Sigmoid colon (tissue), 7 donors: ENCODE measurements at regions of chr19 and their contacts with region 1.

Region 1: DNA sequence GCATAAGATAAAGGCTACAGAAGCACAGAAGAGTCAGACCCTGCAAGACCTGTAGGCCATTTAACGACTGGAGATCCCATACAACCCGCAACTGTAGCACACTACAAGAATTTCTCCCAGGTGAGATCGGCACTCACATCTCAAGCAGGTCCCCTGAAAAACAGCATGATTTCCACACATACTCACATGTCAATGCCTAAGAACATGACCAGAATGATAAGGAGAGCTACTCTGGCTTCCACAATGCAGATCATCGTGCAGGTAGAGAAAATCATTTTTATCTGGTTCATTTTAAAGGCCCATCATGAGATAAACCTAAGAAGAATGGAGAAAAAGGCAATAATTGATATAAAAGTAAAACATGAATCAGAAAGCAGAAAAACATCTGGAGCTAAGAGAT is 17.5 kb upstream of the PEG3 start:
- DNase-seq: no peak
- H3K4me3 ChIP-seq: no peak overlapping the region
- H3K27ac ChIP-seq: no peak overlapping the region
- H3K4me1 ChIP-seq: peaks cover 0 to 51% (median 11%) of the 10 kb centered on the region in 4 donors
- H3K27me3 ChIP-seq: no peaks in the 10 kb centered on the region
- CTCF ChIP-seq: no peak
- EP300 ChIP-seq: no peak
- POLR2A ChIP-seq: no peak

Region 2: DNA sequence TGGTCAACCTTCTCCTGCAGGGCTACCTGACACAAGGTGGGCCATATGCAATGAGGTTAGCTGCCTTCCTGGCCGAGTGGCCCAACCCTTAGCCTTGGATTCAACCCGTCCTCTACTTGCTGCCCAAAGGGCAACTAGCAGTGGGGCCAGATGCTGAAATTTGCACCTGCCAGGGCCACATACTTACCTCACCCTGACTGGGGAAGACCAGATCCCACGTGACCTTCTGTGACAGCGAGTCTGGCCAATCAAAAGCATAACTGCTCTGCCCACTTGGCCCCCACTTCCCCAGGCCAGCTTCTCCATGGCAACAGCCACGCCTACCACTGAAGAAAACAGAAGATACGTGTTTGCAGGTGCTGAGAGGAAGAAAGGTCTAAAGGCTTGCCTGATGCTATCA is 28.4 kb before region 1 on chr19:
- intact Hi-C with region 1: no loop called
- DNase-seq: no peak
- H3K4me3 ChIP-seq: no peak overlapping the region
- H3K27ac ChIP-seq: no peak overlapping the region
- H3K4me1 ChIP-seq: no peaks in the 10 kb centered on the region
- H3K27me3 ChIP-seq: no peaks in the 10 kb centered on the region
- CTCF ChIP-seq: no peak
- EP300 ChIP-seq: no peak
- POLR2A ChIP-seq: no peak

Region 3: DNA sequence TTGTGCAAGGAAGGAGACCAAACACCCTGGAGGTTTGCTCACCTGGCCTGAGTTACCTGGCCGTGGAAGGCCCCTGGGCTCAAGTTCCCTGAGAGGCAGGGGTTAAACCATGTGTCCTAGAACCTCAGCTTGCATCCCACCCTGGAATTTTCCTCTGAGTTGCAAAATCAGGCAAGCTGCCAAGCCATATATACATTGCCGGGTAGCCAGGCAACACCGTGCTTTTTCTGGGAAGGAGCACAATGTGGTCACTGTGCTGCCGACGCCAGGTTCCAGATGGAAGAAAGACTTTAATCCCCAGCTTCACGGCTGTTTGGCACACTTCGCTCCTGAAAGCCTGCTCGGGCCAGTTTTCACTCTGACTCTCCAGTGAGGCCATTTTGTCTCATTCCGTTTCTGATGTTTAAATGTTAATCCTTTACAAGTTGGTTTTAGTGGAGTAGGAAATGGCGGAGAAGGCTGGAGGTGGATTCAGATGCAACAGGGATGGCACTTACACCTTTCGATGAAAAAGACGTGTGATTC is 42.6 kb after region 1 on chr19:
- intact Hi-C with region 1: no loop called
- DNase-seq: no peak
- H3K4me3 ChIP-seq: no peak overlapping the region
- H3K27ac ChIP-seq: no peak overlapping the region
- H3K4me1 ChIP-seq: no peaks in the 10 kb centered on the region
- H3K27me3 ChIP-seq: no peaks in the 10 kb centered on the region
- CTCF ChIP-seq: no peak
- EP300 ChIP-seq: no peak
- POLR2A ChIP-seq: no peak

Region 4: GRCh38 chr19:56966225-56966696 is 108.2 kb after region 1 on chr19:
- intact Hi-C with region 1: loop called (anchors 5 kb)
- DNase-seq: no peak
- H3K4me3 ChIP-seq: no peak overlapping the region
- H3K27ac ChIP-seq: no peak overlapping the region
- H3K4me1 ChIP-seq: peaks cover 0 to 23% (median 20%) of the 10 kb centered on the region in 4 donors
- H3K27me3 ChIP-seq: peaks cover 0 to 14% (median 0%) of the 10 kb centered on the region in 3 donors
- CTCF ChIP-seq: no peak
- EP300 ChIP-seq: no peak
- POLR2A ChIP-seq: no peak

Region 5: GRCh38 chr19:57212109-57212508 is 354.1 kb after region 1 on chr19:
- intact Hi-C with region 1: no loop called
- DNase-seq: no peak
- H3K4me3 ChIP-seq: no peak overlapping the region
- H3K27ac ChIP-seq: no peak overlapping the region
- H3K4me1 ChIP-seq: no peaks in the 10 kb centered on the region
- H3K27me3 ChIP-seq: no peaks in the 10 kb centered on the region
- CTCF ChIP-seq: no peak
- EP300 ChIP-seq: no peak
- POLR2A ChIP-seq: no peak